Transverse colon (tissue), 4 donors: ENCODE measurements at regions of chr22 and their contacts with region 1.

Region 1: GRCh38 chr22:26743149-26743548 is 85.8 kb downstream of the MIAT start:
- DNase-seq: no peak
- H3K4me3 ChIP-seq: no peak overlapping the region
- H3K27ac ChIP-seq: no peak overlapping the region
- H3K4me1 ChIP-seq: peaks cover 0 to 4% (median 0%) of the 10 kb centered on the region in 4 donors
- H3K27me3 ChIP-seq: no peaks in the 10 kb centered on the region
- CTCF ChIP-seq: no peak
- EP300 ChIP-seq: no peak
- POLR2A ChIP-seq: no peak

Region 2: DNA sequence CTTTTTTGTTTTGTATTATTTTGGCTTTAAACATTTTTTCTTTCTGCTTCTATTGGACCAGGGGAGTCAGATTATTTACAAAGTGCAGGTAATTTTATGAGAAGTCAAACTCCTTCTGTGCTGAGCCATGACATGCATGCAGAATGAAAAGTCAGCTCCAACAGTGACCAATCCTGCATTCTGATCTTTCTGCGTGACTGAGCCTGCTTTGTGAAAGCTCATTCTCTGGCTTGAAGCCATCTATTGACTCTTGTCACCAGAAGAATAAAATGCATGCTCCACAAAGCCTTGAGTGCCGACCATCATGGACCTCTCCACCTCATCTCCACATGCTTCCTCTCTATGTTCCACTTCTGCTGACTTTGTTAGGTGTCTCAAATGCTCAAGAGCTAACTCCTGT is 35.6 kb before region 1 on chr22:
- in situ Hi-C with region 1: no loop called
- intact Hi-C with region 1: loop called (anchors 2 kb)
- DNase-seq: no peak
- H3K4me3 ChIP-seq: no peak overlapping the region
- H3K27ac ChIP-seq: peak overlapping the region in 1 of 4 donors; percentile 26
- H3K4me1 ChIP-seq: no peaks in the 10 kb centered on the region
- H3K27me3 ChIP-seq: no peaks in the 10 kb centered on the region
- CTCF ChIP-seq: no peak
- EP300 ChIP-seq: no peak
- POLR2A ChIP-seq: no peak

Region 3: GRCh38 chr22:26974914-26975803 is 232.0 kb after region 1 on chr22:
- in situ Hi-C with region 1: no loop called
- intact Hi-C with region 1: no loop called
- DNase-seq: no peak
- H3K4me3 ChIP-seq: no peak overlapping the region
- H3K27ac ChIP-seq: no peak overlapping the region
- H3K4me1 ChIP-seq: no peaks in the 10 kb centered on the region
- H3K27me3 ChIP-seq: no peaks in the 10 kb centered on the region
- CTCF ChIP-seq: no peak
- EP300 ChIP-seq: no peak
- POLR2A ChIP-seq: no peak